Calu3 (cell line): ENCODE measurements at regions of chr7 and their contacts with region 1.

Region 1: GRCh38 chr7:114085592-114086501 is 167.0 kb upstream of the PPP1R3A start:
- DNase-seq: peak; percentile 81
- H3K4me3 Mint-ChIP-seq: peak overlapping the region; percentile 94
- H3K27ac Mint-ChIP-seq: peak overlapping the region; percentile 85
- H3K4me1 Mint-ChIP-seq: peaks cover 17% of the 10 kb centered on the region
- H3K27me3 Mint-ChIP-seq: no peaks in the 10 kb centered on the region
- CTCF ChIP-seq: no peak

Region 2: GRCh38 chr7:114217026-114217425 is 131.2 kb after region 1 on chr7:
- CTCF ChIA-PET with region 1: interaction called, 4 read pairs
- intact Hi-C with region 1: loop called (anchors 1 kb)
- DNase-seq: no peak
- H3K4me3 Mint-ChIP-seq: no peak overlapping the region
- H3K27ac Mint-ChIP-seq: no peak overlapping the region
- H3K4me1 Mint-ChIP-seq: no peaks in the 10 kb centered on the region
- H3K27me3 Mint-ChIP-seq: no peaks in the 10 kb centered on the region
- CTCF ChIP-seq: no peak

Region 3: DNA sequence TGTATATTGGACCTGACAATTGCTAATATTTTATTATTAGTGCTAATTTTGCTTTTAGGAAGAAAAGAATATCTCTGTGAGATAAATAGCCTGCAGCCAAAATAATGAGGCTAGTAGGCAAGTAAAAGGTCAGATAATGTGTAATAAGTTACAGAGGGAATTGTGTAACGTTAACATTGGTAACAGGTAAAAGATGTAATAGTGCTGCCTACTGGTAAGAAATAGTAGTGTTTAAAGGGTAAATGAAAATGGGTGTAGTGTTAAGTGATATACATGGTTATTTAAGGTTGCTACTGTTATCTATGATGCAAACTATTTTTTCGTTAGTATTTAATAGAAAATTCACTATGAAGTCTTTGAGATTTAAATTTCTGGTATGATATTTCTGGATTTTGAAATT is 319.6 kb after region 1 on chr7:
- CTCF ChIA-PET with region 1: interaction called, 6 read pairs
- intact Hi-C with region 1: loop called (anchors 1 kb)
- DNase-seq: no peak
- H3K4me3 Mint-ChIP-seq: no peak overlapping the region
- H3K27ac Mint-ChIP-seq: no peak overlapping the region
- H3K4me1 Mint-ChIP-seq: peaks cover 7% of the 10 kb centered on the region
- H3K27me3 Mint-ChIP-seq: no peaks in the 10 kb centered on the region
- CTCF ChIP-seq: peak; percentile 55

Region 4: DNA sequence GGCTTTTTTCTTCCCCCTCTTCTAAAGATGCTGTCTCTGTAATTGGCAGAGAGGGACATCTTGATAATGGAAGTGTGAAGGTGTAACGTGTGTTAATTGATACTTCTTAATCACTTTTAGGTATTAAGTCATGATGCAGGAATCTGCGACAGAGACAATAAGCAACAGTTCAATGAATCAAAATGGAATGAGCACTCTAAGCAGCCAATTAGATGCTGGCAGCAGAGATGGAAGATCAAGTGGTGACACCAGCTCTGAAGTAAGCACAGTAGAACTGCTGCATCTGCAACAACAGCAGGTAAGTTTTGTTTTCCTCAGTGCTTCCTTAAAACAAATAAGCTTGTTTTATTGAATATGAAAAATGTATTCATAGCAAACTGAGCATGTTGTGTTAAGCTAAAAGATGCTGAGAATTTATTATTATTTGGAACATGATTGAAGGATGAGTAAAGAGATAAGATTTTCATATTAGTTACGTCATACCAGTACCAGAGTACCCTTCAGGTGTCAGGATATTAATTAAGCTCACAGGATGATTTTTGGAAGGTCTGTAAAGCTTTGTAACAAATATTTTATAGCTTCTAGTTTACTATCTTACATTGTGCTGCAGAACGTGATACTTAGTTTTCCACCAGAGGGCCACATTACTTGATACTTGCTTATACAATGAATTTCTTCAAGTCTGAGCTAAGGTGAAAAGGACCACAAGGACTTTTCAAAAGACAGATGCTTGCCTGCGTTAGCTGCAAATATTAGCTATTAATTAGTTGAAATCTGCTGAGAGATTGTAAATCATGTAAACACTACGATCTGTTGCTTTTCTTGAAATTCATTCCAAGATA is 340.8 kb after region 1 on chr7:
- CTCF ChIA-PET with region 1: interaction called, 10 read pairs
- intact Hi-C with region 1: no loop called
- DNase-seq: no peak
- H3K4me3 Mint-ChIP-seq: no peak overlapping the region
- H3K27ac Mint-ChIP-seq: no peak overlapping the region
- H3K4me1 Mint-ChIP-seq: no peaks in the 10 kb centered on the region
- H3K27me3 Mint-ChIP-seq: no peaks in the 10 kb centered on the region
- CTCF ChIP-seq: peak; percentile 30

Region 5: GRCh38 chr7:114539575-114539974 is 453.7 kb after region 1 on chr7:
- CTCF ChIA-PET with region 1: interaction called, 10 read pairs
- intact Hi-C with region 1: loop called (anchors 2 kb)
- DNase-seq: peak; percentile 46
- H3K4me3 Mint-ChIP-seq: no peak overlapping the region
- H3K27ac Mint-ChIP-seq: no peak overlapping the region
- H3K4me1 Mint-ChIP-seq: no peaks in the 10 kb centered on the region
- H3K27me3 Mint-ChIP-seq: no peaks in the 10 kb centered on the region
- CTCF ChIP-seq: no peak

Region 6: GRCh38 chr7:114663502-114663901 is 577.7 kb after region 1 on chr7:
- CTCF ChIA-PET with region 1: interaction called, 9 read pairs
- intact Hi-C with region 1: loop called (anchors 2 kb)
- DNase-seq: peak; percentile 14
- H3K4me3 Mint-ChIP-seq: no peak overlapping the region
- H3K27ac Mint-ChIP-seq: no peak overlapping the region
- H3K4me1 Mint-ChIP-seq: no peaks in the 10 kb centered on the region
- H3K27me3 Mint-ChIP-seq: no peaks in the 10 kb centered on the region
- CTCF ChIP-seq: no peak

Region 7: GRCh38 chr7:115851291-115851690 is 1765.4 kb after region 1 on chr7:
- CTCF ChIA-PET with region 1: interaction called, 8 read pairs
- intact Hi-C with region 1: loop called (anchors 2 kb)
- DNase-seq: peak; percentile 6
- H3K4me3 Mint-ChIP-seq: no peak overlapping the region
- H3K27ac Mint-ChIP-seq: no peak overlapping the region
- H3K4me1 Mint-ChIP-seq: no peaks in the 10 kb centered on the region
- H3K27me3 Mint-ChIP-seq: no peaks in the 10 kb centered on the region
- CTCF ChIP-seq: peak; percentile 41